Esophagus squamous epithelium (tissue), 5 donors: ENCODE measurements at regions of chr13 and their contacts with region 1.

Region 1: GRCh38 chr13:28329395-28330158 is 165.4 kb downstream of the FLT1 start:
- DNase-seq: no peak
- H3K4me3 ChIP-seq: no peak overlapping the region
- H3K27ac ChIP-seq: no peak overlapping the region
- H3K4me1 ChIP-seq: peaks cover 0 to 10% (median 0%) of the 10 kb centered on the region in 3 donors
- H3K27me3 ChIP-seq: peaks cover 0 to 6% (median 0%) of the 10 kb centered on the region in 4 donors
- CTCF ChIP-seq: no peak
- POLR2A ChIP-seq: no peak

Region 2: GRCh38 chr13:28219408-28220099 is 110.0 kb before region 1 on chr13:
- intact Hi-C with region 1: no loop called
- DNase-seq: no peak
- H3K4me3 ChIP-seq: no peak overlapping the region
- H3K27ac ChIP-seq: no peak overlapping the region
- H3K4me1 ChIP-seq: no peaks in the 10 kb centered on the region
- H3K27me3 ChIP-seq: no peaks in the 10 kb centered on the region
- CTCF ChIP-seq: no peak
- POLR2A ChIP-seq: no peak

Region 3: GRCh38 chr13:28636674-28637317 is 307.2 kb after region 1 on chr13:
- intact Hi-C with region 1: loop called (anchors 5 kb)
- DNase-seq: peak; percentile 10
- H3K4me3 ChIP-seq: no peak overlapping the region
- H3K27ac ChIP-seq: no peak overlapping the region
- H3K4me1 ChIP-seq: peaks cover 0 to 7% (median 0%) of the 10 kb centered on the region in 3 donors
- H3K27me3 ChIP-seq: peaks cover 0 to 5% (median 0%) of the 10 kb centered on the region in 4 donors
- CTCF ChIP-seq: peak; percentile 32 to 88 (median 76)
- POLR2A ChIP-seq: no peak